B cell (primary cell): ENCODE measurements at regions of chr3 and their contacts with region 1.

Region 1: DNA sequence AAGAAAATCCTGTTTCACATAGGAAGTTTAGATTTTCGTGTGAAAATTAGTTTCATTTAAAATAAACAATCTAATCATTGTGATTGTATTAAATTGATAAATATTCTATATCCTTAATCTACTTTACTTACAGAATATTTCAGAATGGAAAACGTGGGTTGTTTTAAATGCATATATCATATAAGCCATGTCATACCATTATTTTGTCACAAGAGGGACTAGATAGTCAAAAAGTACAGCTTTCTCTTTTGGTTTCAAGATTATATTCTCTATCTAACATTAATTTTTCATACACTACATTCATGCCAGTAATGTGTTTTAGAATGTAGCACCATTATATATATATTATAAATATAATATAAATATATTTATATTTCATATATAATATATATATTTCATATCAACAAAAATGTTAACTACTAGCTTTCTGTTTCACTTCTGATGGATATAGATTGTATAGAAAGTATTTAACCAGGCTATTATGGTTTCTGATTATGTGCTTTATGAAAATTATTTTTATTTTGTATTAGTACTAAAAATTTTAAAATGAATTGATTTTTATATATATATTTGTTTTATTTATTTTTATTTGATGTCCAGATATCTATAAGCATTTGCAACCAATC is 45.3 kb downstream of the OSTN start:
- DNase-seq: peak; percentile 56
- ATAC-seq: no peak
- H3K4me3 ChIP-seq: no peak overlapping the region
- H3K4me3 Mint-ChIP-seq: no peak overlapping the region
- H3K27ac ChIP-seq: peak overlapping the region; percentile 70 to 73
- H3K27ac Mint-ChIP-seq: no peak overlapping the region
- H3K4me1 ChIP-seq: peaks cover 20% of the 10 kb centered on the region in 2 donors
- H3K4me1 Mint-ChIP-seq: peaks cover 34% of the 10 kb centered on the region
- H3K27me3 ChIP-seq: no peaks in the 10 kb centered on the region
- H3K27me3 Mint-ChIP-seq: no peaks in the 10 kb centered on the region
- CTCF ChIP-seq: peak; percentile 85

Region 2: DNA sequence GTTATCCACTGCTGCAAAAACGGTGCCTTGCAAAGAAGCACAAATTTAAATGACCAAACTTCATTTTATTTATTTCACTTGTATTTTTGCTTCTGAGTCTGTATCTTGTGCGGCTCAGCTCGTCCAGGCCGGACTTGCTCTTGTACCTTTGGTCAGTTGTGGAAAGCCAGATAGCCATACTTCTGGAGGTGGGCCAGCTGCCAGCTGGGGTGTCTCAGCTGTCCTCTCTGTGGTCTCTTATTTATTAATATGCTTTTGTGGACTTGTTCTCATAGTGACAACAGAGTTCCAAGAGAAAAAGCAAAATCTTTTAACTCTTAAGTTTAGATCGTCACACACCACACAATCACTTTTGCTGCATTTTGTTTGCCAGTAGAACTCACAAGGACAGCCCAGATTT is 642.7 kb before region 1 on chr3:
- CTCF ChIA-PET with region 1: no interaction called
- POLR2A ChIA-PET with region 1: no interaction called
- intact Hi-C with region 1: no loop called
- DNase-seq: no peak
- ATAC-seq: no peak
- H3K4me3 ChIP-seq: no peak overlapping the region
- H3K4me3 Mint-ChIP-seq: no peak overlapping the region
- H3K27ac ChIP-seq: no peak overlapping the region
- H3K27ac Mint-ChIP-seq: no peak overlapping the region
- H3K4me1 ChIP-seq: no peaks in the 10 kb centered on the region
- H3K4me1 Mint-ChIP-seq: no peaks in the 10 kb centered on the region
- H3K27me3 ChIP-seq: no peaks in the 10 kb centered on the region
- H3K27me3 Mint-ChIP-seq: no peaks in the 10 kb centered on the region
- CTCF ChIP-seq: no peak

Region 3: DNA sequence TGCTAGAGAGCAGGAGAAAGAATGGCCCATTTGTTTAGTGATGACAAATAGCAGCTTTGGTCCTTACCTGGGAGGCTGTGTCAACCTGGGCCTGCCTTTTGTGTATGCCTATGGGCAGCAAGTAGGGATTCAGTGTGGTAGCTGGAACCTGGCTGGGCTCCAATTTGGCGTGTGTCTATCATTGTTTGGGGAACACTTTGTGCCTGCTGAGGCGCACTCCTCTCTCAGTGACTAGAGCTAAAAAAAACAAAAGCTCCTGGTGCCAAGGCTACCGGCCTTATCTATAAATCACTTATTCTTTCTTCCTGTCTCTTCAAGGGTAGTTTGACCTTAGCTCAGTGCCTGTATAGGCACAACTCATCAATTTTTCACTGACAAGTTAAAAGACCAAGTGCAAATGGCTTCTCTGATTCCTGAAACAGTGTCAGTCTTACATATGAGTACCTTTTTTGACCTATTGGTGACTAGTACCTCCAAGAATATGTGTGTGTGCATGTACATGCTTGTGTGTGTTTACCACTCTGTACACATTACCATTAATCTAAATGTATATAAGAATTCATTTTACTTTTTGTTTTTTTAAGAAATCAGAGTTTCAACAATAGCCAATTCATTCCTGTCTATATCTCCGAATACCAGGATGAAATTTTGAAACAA is 436.5 kb before region 1 on chr3:
- CTCF ChIA-PET with region 1: no interaction called
- POLR2A ChIA-PET with region 1: no interaction called
- intact Hi-C with region 1: no loop called
- DNase-seq: no peak
- ATAC-seq: no peak
- H3K4me3 ChIP-seq: no peak overlapping the region
- H3K4me3 Mint-ChIP-seq: no peak overlapping the region
- H3K27ac ChIP-seq: no peak overlapping the region
- H3K27ac Mint-ChIP-seq: no peak overlapping the region
- H3K4me1 ChIP-seq: no peaks in the 10 kb centered on the region
- H3K4me1 Mint-ChIP-seq: no peaks in the 10 kb centered on the region
- H3K27me3 ChIP-seq: no peaks in the 10 kb centered on the region
- H3K27me3 Mint-ChIP-seq: peaks cover 4% of the 10 kb centered on the region
- CTCF ChIP-seq: no peak

Region 4: GRCh38 chr3:191290311-191291025 is 46.1 kb after region 1 on chr3:
- CTCF ChIA-PET with region 1: interaction called, 23 read pairs
- POLR2A ChIA-PET with region 1: no interaction called
- intact Hi-C with region 1: no loop called
- DNase-seq: peak; percentile 69
- ATAC-seq: peak; percentile 83
- H3K4me3 ChIP-seq: peak overlapping the region in 3 of 5 experiments; percentile 5 to 53 (median 32)
- H3K4me3 Mint-ChIP-seq: peak overlapping the region; percentile 75
- H3K27ac ChIP-seq: peak overlapping the region; percentile 78 to 90
- H3K27ac Mint-ChIP-seq: peak overlapping the region; percentile 75
- H3K4me1 ChIP-seq: peaks cover 39 to 44% of the 10 kb centered on the region in 2 donors
- H3K4me1 Mint-ChIP-seq: peaks cover 36% of the 10 kb centered on the region
- H3K27me3 ChIP-seq: no peaks in the 10 kb centered on the region
- H3K27me3 Mint-ChIP-seq: no peaks in the 10 kb centered on the region
- CTCF ChIP-seq: no peak

Region 5: GRCh38 chr3:191328962-191329653 is 84.8 kb after region 1 on chr3 and contains the start of gene CCDC50:
- CTCF ChIA-PET with region 1: interaction called, 12 read pairs
- POLR2A ChIA-PET with region 1: interaction called, 4 read pairs
- intact Hi-C with region 1: loop called (anchors 1 kb)
- DNase-seq: peak; percentile 84
- ATAC-seq: peak; percentile 82
- H3K4me3 ChIP-seq: peak within 1 kb of the TSS; percentile 53 to 96 (median 89)
- H3K4me3 Mint-ChIP-seq: peak within 1 kb of the TSS; percentile 97
- H3K27ac ChIP-seq: peak within 1 kb of the TSS; percentile 89 to 95
- H3K27ac Mint-ChIP-seq: peak within 1 kb of the TSS; percentile 93
- H3K4me1 ChIP-seq: peaks cover 42 to 48% of the 10 kb centered on the region in 2 donors
- H3K4me1 Mint-ChIP-seq: peaks cover 50% of the 10 kb centered on the region
- H3K27me3 ChIP-seq: no peaks in the 10 kb centered on the region
- H3K27me3 Mint-ChIP-seq: no peaks in the 10 kb centered on the region
- CTCF ChIP-seq: no peak
- total RNA-seq, gene CCDC50: 121 and 124 TPM in 2 replicates

Region 6: DNA sequence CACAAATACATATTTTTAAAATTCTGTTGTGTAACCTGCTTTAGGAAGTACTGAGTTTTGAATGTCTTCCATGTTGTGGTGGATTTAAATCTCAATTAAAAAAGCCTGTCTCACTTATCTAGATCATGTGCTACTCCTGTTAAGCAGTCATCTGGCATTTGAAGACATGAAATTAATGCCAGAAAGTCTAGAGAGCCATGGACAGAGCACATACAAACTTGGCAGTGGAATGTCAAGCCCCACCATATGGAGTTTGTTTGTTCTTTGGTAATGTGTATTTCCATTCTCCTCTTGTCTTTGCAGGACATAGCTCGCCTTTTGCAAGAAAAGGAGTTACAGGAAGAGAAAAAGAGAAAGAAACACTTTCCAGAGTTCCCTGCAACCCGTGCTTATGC is 125.3 kb after region 1 on chr3:
- CTCF ChIA-PET with region 1: interaction called, 12 read pairs
- POLR2A ChIA-PET with region 1: no interaction called
- intact Hi-C with region 1: no loop called
- DNase-seq: no peak
- ATAC-seq: no peak
- H3K4me3 ChIP-seq: no peak overlapping the region
- H3K4me3 Mint-ChIP-seq: no peak overlapping the region
- H3K27ac ChIP-seq: peak overlapping the region in 1 of 2 donors; percentile 8
- H3K27ac Mint-ChIP-seq: no peak overlapping the region
- H3K4me1 ChIP-seq: peaks cover 8 to 15% of the 10 kb centered on the region in 2 donors
- H3K4me1 Mint-ChIP-seq: peaks cover 19% of the 10 kb centered on the region
- H3K27me3 ChIP-seq: no peaks in the 10 kb centered on the region
- H3K27me3 Mint-ChIP-seq: no peaks in the 10 kb centered on the region
- CTCF ChIP-seq: no peak

Region 7: GRCh38 chr3:191388823-191389222 is 144.5 kb after region 1 on chr3:
- CTCF ChIA-PET with region 1: interaction called, 31 read pairs
- POLR2A ChIA-PET with region 1: no interaction called
- intact Hi-C with region 1: loop called (anchors 1 kb)
- DNase-seq: peak; percentile 23
- ATAC-seq: no peak
- H3K4me3 ChIP-seq: no peak overlapping the region
- H3K4me3 Mint-ChIP-seq: no peak overlapping the region
- H3K27ac ChIP-seq: no peak overlapping the region
- H3K27ac Mint-ChIP-seq: no peak overlapping the region
- H3K4me1 ChIP-seq: no peaks in the 10 kb centered on the region
- H3K4me1 Mint-ChIP-seq: peaks cover 15% of the 10 kb centered on the region
- H3K27me3 ChIP-seq: no peaks in the 10 kb centered on the region
- H3K27me3 Mint-ChIP-seq: no peaks in the 10 kb centered on the region
- CTCF ChIP-seq: peak; percentile 69